ENCODE measurements at regions of chr7 and their contacts with region 1.

Region 1: DNA sequence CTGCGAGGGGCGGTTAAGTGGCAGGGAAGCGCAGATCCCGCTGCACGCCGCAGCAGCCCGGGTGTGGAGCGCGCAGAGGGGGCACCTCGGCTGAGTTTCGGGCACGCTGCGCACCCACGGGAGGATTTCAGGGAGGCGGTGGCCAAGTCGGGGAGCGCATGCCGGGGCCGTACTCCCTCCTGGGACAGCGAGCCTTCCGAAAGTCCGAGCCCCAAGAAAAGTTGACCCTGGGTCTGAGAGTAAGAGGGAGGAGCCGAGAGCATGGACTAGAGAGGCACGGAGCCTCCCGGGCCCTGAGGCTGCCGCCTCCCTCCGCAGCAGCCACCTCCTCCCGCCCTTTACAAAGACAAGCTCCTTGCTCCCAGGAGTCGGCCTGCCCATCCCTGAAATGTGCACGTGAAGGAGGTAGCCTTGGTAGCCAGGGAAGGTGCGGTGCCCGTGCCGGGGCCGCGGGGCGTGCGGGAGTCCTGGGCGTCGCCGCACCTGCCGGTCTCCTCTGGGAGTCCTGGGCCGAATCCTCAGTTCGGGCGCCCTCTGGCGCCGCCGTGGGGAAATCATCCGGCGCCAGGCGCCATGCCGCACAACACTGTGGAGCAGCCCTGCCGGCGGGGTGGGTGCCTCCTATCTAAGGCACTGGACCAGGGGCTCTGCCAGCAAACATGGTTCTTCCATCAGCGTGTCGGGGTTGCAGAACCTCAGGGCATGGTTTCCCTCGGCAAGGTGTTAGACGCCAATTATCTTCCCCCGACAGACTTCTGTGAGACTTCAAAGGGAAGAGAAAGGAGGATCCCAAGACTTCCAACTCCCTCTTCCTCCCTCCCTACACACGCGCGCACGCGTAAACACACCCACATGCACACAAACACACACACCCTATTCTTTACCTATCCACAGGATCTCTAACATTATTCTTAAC is 104.0 kb downstream of the TRIL start:
- DNase-seq: peak; percentile 93
- ATAC-seq: peak; percentile 98

Region 2: DNA sequence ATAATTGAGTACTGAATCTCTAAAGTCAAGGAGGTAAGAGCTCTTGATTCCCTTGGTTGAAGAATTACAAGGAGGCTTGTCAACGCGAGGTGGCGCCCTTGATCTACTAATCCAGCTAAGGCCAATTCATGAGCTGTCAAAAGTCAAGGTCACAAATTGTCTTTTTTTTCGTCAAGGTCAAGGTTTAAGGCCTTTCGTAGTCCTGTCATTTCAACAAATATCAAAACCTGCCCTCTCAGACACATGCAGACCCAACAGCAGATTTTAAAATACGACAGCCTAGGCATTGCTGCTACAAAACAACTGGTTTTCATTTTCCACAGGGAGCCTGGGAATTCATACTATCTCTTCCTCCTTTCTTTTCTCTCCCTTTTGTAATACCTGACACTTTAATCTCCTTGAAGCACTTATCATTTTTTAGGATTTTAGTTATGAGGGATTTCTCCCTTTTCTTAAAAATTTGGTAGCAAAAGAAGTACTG is 1657.8 kb before region 1 on chr7:
- intact Hi-C with region 1: loop called (anchors 5 kb)
- DNase-seq: peak; percentile 88
- ATAC-seq: peak; percentile 50

Region 3: DNA sequence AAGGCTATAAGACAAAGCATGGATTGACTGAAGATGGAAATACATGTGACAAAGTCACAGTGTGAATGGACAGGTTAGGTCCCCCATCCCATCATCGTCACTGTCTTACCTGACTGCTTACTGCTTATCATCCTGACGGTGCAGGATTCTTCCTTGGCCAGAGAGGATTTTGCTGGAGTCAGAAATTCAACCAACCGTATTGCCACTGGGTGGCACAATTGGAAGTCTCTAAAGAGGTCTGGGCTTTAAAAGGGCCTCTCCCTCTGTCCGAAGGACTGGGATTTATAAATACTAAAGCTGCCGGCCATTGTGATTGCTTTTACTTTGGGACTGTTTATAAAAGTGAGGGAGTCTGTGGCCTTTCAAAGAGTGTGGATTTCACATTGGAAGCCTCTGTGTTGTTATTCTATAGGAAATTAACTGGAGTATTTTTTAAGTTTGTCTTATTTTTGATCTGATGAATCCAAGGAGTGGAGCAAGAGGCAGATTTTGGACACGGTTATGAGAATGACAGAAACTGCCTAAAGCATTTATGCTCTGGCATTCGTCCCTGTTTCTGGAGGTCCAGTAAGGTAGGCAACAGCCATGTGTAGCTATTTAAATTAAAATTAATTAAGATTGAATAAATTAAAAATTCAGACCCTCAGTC is 555.1 kb before region 1 on chr7:
- intact Hi-C with region 1: loop called (anchors 1 kb)
- DNase-seq: no peak
- ATAC-seq: peak; percentile 69

Region 4: GRCh38 chr7:28389504-28390395 is 464.3 kb before region 1 on chr7:
- intact Hi-C with region 1: loop called (anchors 2 kb)
- DNase-seq: no peak
- ATAC-seq: peak; percentile 13

Region 5: GRCh38 chr7:28626624-28627262 is 227.3 kb before region 1 on chr7:
- intact Hi-C with region 1: loop called (anchors 5 kb)
- DNase-seq: no peak
- ATAC-seq: no peak

Region 6: GRCh38 chr7:28685644-28686417 is 168.3 kb before region 1 on chr7:
- intact Hi-C with region 1: loop called (anchors 10 kb)
- DNase-seq: peak; percentile 92
- ATAC-seq: peak; percentile 94

Region 7: DNA sequence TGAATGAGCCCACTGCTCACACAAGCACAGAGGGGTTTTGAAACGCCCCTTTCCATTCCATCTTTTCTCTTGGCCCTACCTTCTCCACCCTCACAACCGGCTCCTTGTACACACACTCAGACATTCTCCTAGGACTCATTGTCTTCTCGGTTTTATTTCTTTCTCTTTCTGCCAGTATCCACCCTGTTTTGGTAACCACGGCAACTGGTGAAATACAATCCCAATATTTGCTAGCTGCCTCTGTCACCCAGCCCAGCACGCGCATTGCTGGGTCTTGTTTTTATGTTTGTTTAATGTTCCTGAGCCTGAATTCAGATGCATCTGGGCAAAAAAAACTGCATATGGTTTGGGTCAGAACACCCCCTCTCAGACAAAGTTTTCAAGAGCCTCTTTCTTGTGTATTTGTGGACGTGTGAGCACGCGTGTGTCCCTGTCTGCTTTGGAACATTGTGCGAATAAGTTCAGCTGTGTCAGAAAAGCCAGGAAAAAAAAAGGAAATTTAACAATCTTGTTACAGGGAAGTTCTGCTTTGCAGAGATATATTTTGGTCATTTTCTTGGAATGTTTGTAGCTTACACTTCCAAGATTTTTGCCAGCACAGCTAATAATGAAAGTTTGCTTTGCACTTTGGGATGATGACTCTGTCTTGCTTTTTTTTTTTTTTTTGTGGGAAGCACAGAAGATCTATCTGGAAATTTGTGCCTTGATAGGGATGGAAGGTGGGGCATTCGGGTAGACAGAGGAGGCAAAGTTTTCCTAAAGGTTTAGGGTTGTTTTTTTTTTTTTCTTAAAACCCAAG is 121.8 kb before region 1 on chr7:
- intact Hi-C with region 1: loop called (anchors 5 kb)
- DNase-seq: no peak
- ATAC-seq: peak; percentile 67

Region 8: DNA sequence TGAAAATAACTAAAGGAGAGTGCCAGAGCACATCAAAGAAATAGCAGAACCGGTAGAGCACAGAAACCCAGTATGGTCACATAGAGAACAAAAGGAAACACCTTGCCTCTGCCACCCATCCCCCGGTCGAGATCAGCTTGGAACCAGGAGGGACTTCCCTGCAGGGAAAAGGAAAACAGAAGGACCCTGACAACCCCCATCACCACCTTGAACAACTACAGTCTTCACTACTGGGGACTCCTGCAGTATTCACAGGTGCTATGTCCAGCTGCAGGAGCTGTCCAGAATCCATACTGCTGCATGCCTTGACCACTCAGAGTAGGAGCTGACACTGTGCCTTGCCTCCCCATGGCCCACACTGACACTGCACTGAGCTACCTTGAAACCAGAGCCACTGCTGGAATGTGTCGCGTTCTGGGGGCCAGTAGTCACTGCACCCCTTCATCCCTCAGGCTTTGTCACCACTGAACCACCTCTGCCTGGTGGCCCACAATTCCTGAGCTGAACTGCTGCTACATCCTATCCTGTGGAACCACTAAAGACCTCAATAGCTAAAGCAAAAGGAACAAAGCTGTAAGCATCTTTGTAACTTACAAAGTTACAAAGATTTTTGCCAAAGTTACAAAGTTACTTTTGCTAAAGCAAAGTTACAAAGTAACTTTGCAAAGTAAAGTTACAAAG is 37.2 kb after region 1 on chr7:
- intact Hi-C with region 1: no loop called
- DNase-seq: no peak
- ATAC-seq: no peak

Region 9: GRCh38 chr7:29022301-29022988 is 168.4 kb after region 1 on chr7:
- intact Hi-C with region 1: no loop called
- DNase-seq: no peak
- ATAC-seq: no peak